ENCODE measurements at regions of chr17 and their contacts with region 1.

Region 1: GRCh38 chr17:73595479-73595878 is 48.8 kb downstream of the SDK2 start:
- DNase-seq: peak; percentile 55
- H3K4me3 Mint-ChIP-seq: no peak overlapping the region
- H3K27ac Mint-ChIP-seq: no peak overlapping the region
- H3K4me1 Mint-ChIP-seq: peaks cover 43% of the 10 kb centered on the region
- H3K27me3 Mint-ChIP-seq: no peaks in the 10 kb centered on the region

Region 2: DNA sequence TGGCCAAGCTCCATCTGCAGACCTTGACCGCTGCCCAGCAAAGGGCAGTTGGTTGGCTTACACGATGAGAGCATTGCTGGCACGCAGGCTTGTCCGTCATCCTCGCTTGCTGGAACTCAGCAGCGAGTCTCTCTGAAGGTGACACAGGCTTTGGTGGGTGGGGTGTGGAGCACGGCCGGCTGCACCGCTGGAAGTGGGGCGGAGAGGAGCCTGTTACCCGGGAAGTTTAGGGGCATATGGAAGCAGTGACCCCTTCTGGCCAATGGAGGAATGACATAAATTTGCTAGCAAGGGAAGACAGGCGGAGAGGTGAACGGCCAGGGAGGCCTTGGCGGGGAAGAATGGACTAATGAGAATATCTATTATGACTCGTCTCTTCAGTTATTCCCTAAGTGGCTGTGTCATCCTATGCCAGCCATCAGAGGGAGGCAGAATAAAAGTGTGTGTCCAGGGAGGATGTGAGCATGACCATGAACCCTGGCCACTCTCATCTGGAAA is 114.7 kb after region 1 on chr17:
- CTCF ChIA-PET with region 1: no interaction called
- intact Hi-C with region 1: loop called (anchors 2 kb)
- DNase-seq: peak; percentile 84
- H3K4me3 Mint-ChIP-seq: no peak overlapping the region
- H3K27ac Mint-ChIP-seq: no peak overlapping the region
- H3K4me1 Mint-ChIP-seq: peaks cover 6% of the 10 kb centered on the region
- H3K27me3 Mint-ChIP-seq: no peaks in the 10 kb centered on the region

Region 3: GRCh38 chr17:73757420-73757819 is 161.9 kb after region 1 on chr17:
- CTCF ChIA-PET with region 1: no interaction called
- intact Hi-C with region 1: no loop called
- DNase-seq: peak; percentile 14
- H3K4me3 Mint-ChIP-seq: no peak overlapping the region
- H3K27ac Mint-ChIP-seq: no peak overlapping the region
- H3K4me1 Mint-ChIP-seq: peaks cover 17% of the 10 kb centered on the region
- H3K27me3 Mint-ChIP-seq: no peaks in the 10 kb centered on the region

Region 4: DNA sequence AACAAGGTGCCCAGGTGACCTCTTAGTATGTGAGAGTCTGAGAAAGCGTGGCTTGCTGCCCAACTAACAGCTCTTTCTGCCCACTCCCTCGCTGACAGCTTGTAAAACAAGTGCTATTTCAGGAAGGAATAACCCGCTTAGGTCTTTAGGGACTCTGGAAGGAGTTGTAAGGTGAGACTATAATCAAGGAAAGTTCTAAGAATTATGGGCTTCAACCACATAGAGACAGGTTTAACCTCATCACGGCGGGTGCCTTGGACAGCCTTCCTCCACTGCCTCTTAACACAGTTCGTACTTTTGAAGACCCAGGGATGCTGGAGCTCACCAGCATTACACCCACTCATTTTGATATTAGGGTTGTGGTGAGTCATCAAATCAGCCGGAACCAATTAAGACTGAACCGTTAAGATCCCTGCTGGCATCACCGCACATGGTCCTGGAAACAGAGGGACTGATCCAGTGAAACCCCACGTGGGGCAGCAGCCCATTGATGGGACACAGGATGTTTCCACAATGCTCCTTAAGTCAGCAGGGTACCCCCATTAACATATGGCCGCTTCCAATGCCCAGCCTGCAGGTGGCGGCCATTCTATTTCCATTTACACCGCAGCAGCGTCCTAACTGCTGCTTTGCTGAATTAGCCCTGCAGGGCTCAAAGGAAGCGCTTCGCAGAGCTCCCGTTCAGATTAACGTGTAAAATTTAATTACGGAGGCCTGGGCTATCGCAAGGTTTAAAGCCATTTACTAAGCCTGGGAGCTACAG is 225.4 kb after region 1 on chr17:
- CTCF ChIA-PET with region 1: no interaction called
- intact Hi-C with region 1: loop called (anchors 10 kb)
- DNase-seq: no peak
- H3K4me3 Mint-ChIP-seq: no peak overlapping the region
- H3K27ac Mint-ChIP-seq: no peak overlapping the region
- H3K4me1 Mint-ChIP-seq: peaks cover 25% of the 10 kb centered on the region
- H3K27me3 Mint-ChIP-seq: peaks cover 3% of the 10 kb centered on the region